GM12878 (cell line): ENCODE measurements at regions of chr10 and their contacts with region 1.

Region 1: DNA sequence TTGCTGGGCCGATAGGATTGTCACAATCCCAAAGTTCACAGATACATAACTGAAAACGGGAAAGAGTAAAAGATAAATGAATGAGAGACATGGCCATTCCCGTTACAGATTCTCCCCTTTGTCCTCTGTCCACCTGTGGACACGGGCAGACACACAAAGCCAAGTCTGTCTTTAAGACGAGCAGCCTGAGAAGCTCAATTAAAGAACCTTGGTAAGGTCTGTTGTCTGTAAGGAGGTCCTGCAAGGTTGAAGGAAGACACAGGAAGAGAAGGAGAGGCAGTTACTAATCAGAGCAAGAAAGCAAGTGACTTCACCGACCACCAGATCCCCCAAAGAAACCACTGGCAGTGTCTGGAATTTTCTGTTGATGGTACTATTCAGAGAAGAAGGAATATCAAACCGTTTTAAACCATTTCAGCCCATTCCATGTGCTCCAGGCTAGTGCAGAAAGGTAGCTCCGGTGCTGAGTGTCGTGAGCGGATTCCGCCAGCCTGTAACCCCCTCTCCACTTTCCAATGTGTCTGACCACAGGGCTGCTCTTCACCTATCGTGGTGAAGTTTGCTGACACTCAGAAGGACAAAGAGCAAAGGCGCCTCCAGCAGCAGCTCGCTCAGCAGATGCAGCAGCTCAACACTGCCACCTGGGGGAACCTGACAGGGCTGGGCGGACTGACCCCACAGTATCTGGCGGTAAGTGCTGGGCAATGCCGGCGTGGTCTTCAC is 252.6 kb downstream of the CELF2 start:
- DNase-seq: peak; percentile 60
- ATAC-seq: peak; percentile 97
- H3K4me3 ChIP-seq: peak overlapping the region; percentile 20; the same call in 1 of the 2 replicates
- H3K27ac ChIP-seq: peak overlapping the region; percentile 76
- H3K4me1 ChIP-seq: peaks cover 52% of the 10 kb centered on the region
- H3K27me3 ChIP-seq: no peaks in the 10 kb centered on the region
- CTCF ChIP-seq: peak; percentile 98 to 99 (median 99); a peak in 5 of 6 replicates
- EP300 ChIP-seq: no peak
- POLR2A ChIP-seq: peak; percentile 76
- RAD21 ChIP-seq: peak; percentile 98

Region 2: GRCh38 chr10:10677479-10677878 is 592.8 kb before region 1 on chr10:
- CTCF ChIA-PET with region 1: no interaction called
- POLR2A ChIA-PET with region 1: no interaction called
- RAD21 ChIA-PET with region 1: no interaction called
- SMC1A ChIA-PET with region 1: no interaction called
- in situ Hi-C with region 1: no loop called
- intact Hi-C with region 1: loop called (anchors 10 kb)
- DNase-seq: peak; percentile 11
- ATAC-seq: peak; percentile 83
- H3K4me3 ChIP-seq: no peak overlapping the region
- H3K27ac ChIP-seq: no peak overlapping the region
- H3K4me1 ChIP-seq: 0 out of 2 replicates have a peak, but pooled peaks cover 5% of the 10 kb centered on the region
- H3K27me3 ChIP-seq: no peaks in the 10 kb centered on the region
- CTCF ChIP-seq: peak in 2 of 3 experiments; percentile 47 to 51; a peak in 4 of 6 replicates
- EP300 ChIP-seq: no peak
- POLR2A ChIP-seq: no peak
- RAD21 ChIP-seq: peak; percentile 73

Region 3: DNA sequence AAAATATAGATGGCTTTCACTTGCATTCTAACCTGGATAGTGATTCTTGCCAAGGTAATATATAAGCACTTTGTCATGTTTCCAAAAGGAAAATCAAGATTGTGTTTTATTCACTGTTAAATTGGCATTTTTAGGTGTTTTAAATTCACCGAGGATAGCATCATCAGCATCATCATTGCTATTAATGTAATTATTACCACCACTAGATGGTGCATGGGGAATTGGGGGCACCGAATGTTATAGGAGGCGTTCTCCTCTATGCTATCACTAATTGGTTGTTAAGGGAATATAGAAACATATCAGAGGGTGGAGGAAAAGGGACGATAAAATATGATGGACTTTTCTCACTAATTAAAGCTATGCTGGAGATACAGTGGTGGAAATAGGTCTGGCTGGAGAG is 157.1 kb before region 1 on chr10:
- CTCF ChIA-PET with region 1: interaction called, 90 read pairs
- POLR2A ChIA-PET with region 1: interaction called, 4 read pairs
- RAD21 ChIA-PET with region 1: interaction called, 46 read pairs
- SMC1A ChIA-PET with region 1: interaction called, 56 read pairs
- in situ Hi-C with region 1: loop called (anchors 5 kb)
- intact Hi-C with region 1: loop called (anchors 1 kb)
- DNase-seq: peak; percentile 20
- ATAC-seq: peak; percentile 97
- H3K4me3 ChIP-seq: no peak overlapping the region
- H3K27ac ChIP-seq: no peak overlapping the region
- H3K4me1 ChIP-seq: no peaks in the 10 kb centered on the region
- H3K27me3 ChIP-seq: no peaks in the 10 kb centered on the region
- CTCF ChIP-seq: peak; percentile 58 to 70 (median 59); a peak in 5 of 6 replicates
- EP300 ChIP-seq: no peak
- POLR2A ChIP-seq: no peak
- RAD21 ChIP-seq: peak; percentile 81

Region 4: GRCh38 chr10:11170993-11171851 is 99.1 kb before region 1 on chr10:
- CTCF ChIA-PET with region 1: interaction called, 114 read pairs
- POLR2A ChIA-PET with region 1: interaction called, 5 read pairs
- RAD21 ChIA-PET with region 1: interaction called, 53 read pairs
- SMC1A ChIA-PET with region 1: interaction called, 87 read pairs
- in situ Hi-C with region 1: no loop called
- intact Hi-C with region 1: no loop called
- DNase-seq: no peak
- ATAC-seq: peak; percentile 23
- H3K4me3 ChIP-seq: peak overlapping the region; percentile 96
- H3K27ac ChIP-seq: peak overlapping the region; percentile 95
- H3K4me1 ChIP-seq: peaks cover 26% of the 10 kb centered on the region
- H3K27me3 ChIP-seq: no peaks in the 10 kb centered on the region
- CTCF ChIP-seq: no peak
- EP300 ChIP-seq: 0 out of 4 replicates have a peak, but pooled peaks of 1 of the 2 experiments have one; percentile 14
- POLR2A ChIP-seq: peak; percentile 33; the same call in 1 of the 2 replicates
- RAD21 ChIP-seq: no peak

Region 5: GRCh38 chr10:11209830-11210181 is 60.5 kb before region 1 on chr10:
- CTCF ChIA-PET with region 1: interaction called, 20 read pairs
- POLR2A ChIA-PET with region 1: interaction called, 4 read pairs
- RAD21 ChIA-PET with region 1: interaction called, 14 read pairs
- SMC1A ChIA-PET with region 1: interaction called, 22 read pairs
- in situ Hi-C with region 1: no loop called
- intact Hi-C with region 1: no loop called
- DNase-seq: no peak
- ATAC-seq: peak; percentile 35
- H3K4me3 ChIP-seq: peak overlapping the region; percentile 7
- H3K27ac ChIP-seq: peak overlapping the region; percentile 92
- H3K4me1 ChIP-seq: peaks cover 86% of the 10 kb centered on the region
- H3K27me3 ChIP-seq: no peaks in the 10 kb centered on the region
- CTCF ChIP-seq: no peak
- EP300 ChIP-seq: no peak; a peak in 1 of 4 replicates
- POLR2A ChIP-seq: no peak
- RAD21 ChIP-seq: no peak

Region 6: GRCh38 chr10:11242443-11243387 is 27.6 kb before region 1 on chr10:
- CTCF ChIA-PET with region 1: interaction called, 44 read pairs
- POLR2A ChIA-PET with region 1: interaction called, 5 read pairs
- RAD21 ChIA-PET with region 1: interaction called, 30 read pairs
- SMC1A ChIA-PET with region 1: interaction called, 97 read pairs
- in situ Hi-C with region 1: no loop called
- intact Hi-C with region 1: loop called (anchors 2 kb)
- DNase-seq: peak; percentile 90
- ATAC-seq: peak; percentile 58
- H3K4me3 ChIP-seq: peak overlapping the region; percentile 57
- H3K27ac ChIP-seq: peak overlapping the region; percentile 97
- H3K4me1 ChIP-seq: peaks cover 80% of the 10 kb centered on the region
- H3K27me3 ChIP-seq: no peaks in the 10 kb centered on the region
- CTCF ChIP-seq: peak in 1 of 3 experiments; percentile 40; a peak in 2 of 6 replicates
- EP300 ChIP-seq: peak in 1 of 2 experiments; percentile 85; a peak in 2 of 4 replicates
- POLR2A ChIP-seq: peak; percentile 86
- RAD21 ChIP-seq: peak; percentile 2; the same call in 1 of the 2 replicates

Region 7: GRCh38 chr10:11355592-11355991 is 85.3 kb after region 1 on chr10:
- CTCF ChIA-PET with region 1: no interaction called
- POLR2A ChIA-PET with region 1: no interaction called
- RAD21 ChIA-PET with region 1: no interaction called
- SMC1A ChIA-PET with region 1: no interaction called
- in situ Hi-C with region 1: no loop called
- intact Hi-C with region 1: no loop called
- DNase-seq: no peak
- ATAC-seq: no peak
- H3K4me3 ChIP-seq: no peak overlapping the region
- H3K27ac ChIP-seq: no peak overlapping the region
- H3K4me1 ChIP-seq: no peaks in the 10 kb centered on the region
- H3K27me3 ChIP-seq: no peaks in the 10 kb centered on the region
- CTCF ChIP-seq: no peak
- EP300 ChIP-seq: no peak
- POLR2A ChIP-seq: no peak
- RAD21 ChIP-seq: no peak

Region 8: DNA sequence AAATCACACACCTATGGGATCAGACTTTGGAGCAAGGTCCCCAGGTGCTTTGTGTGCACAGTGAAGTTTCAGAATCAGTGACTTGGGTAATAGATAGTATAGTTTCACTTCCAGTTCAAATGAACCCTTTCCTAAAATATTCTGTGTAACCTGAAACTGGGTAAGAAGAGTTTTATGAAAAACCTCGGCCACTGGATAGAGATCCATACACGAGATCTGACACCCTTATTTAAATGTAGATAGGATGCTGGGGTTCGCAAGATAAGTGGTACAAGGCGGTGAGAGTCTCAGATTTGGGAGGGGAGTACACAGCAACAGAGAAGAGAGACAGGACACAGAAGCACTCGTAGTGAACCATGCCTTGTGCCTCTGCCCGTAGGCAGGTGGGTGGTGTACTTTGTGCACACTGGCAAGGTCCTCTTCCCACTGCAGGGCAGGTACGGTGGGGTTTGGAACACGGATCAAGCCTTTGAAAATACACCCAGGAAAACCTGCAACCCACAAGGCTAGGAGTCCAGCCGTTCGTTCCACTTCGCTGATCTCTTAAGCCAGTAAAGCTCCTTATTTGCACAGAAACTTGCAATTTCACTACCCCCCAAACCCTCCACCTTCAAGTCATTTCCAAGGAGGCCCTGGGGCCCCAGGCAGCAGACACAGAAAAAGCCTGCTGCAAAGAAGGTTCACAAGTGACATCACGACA is 178.4 kb after region 1 on chr10:
- CTCF ChIA-PET with region 1: no interaction called
- POLR2A ChIA-PET with region 1: no interaction called
- RAD21 ChIA-PET with region 1: no interaction called
- SMC1A ChIA-PET with region 1: no interaction called
- in situ Hi-C with region 1: no loop called
- intact Hi-C with region 1: no loop called
- DNase-seq: peak; percentile 44
- ATAC-seq: peak; percentile 84
- H3K4me3 ChIP-seq: peak overlapping the region; percentile 63
- H3K27ac ChIP-seq: peak overlapping the region; percentile 85
- H3K4me1 ChIP-seq: peaks cover 37% of the 10 kb centered on the region
- H3K27me3 ChIP-seq: no peaks in the 10 kb centered on the region
- CTCF ChIP-seq: no peak
- EP300 ChIP-seq: no peak
- POLR2A ChIP-seq: no peak
- RAD21 ChIP-seq: no peak